Lower leg skin (tissue), 4 donors: ENCODE measurements at regions of chr13 and their contacts with region 1.

Region 1: DNA sequence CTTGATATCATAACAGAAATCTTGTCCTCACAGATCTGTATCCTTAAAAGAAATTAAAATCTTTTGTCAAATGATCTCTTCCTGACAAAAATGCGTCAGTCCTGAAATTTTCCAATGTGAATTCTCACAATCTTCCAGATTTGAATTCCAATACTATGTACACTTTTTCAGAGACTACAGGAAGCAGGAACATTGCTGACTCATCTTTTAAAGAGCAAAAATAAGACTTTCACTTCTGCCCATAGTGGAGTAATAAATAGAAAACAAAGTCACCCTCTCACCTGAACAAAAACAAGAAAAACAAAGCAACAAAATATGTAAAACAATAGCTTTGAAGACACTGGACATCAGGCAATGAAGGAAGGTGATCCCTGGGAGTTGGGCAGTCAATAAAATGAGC is 167.0 kb upstream of the IPO5 start:
- DNase-seq: no peak
- H3K4me3 ChIP-seq: no peak overlapping the region
- CTCF ChIP-seq: no peak
- POLR2A ChIP-seq: no peak

Region 2: DNA sequence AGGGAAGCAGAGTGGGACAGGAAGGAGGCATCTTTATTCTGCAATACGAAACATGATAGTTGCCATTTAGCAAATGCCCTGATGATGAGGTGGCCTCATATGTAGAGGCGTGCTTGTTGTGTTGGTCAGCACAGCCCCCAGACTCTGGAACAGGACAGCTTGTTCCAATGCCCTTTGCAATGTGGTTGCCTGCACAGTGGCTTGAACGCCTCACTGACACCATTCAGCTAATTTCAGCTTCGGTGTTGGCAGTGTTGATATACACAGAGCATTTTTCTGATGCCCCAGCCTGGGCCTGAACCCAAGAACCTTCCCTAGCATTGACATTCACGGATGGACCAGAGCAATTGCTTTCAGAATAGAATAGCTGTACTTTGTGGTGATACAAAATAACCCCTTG is 1563.3 kb before region 1 on chr13:
- intact Hi-C with region 1: loop called (anchors 5 kb)
- DNase-seq: no peak
- H3K4me3 ChIP-seq: no peak overlapping the region
- CTCF ChIP-seq: no peak
- POLR2A ChIP-seq: no peak